CD4-positive, alpha-beta memory T cell (primary cell): ENCODE measurements at regions of chr2 and their contacts with region 1.

Region 1: DNA sequence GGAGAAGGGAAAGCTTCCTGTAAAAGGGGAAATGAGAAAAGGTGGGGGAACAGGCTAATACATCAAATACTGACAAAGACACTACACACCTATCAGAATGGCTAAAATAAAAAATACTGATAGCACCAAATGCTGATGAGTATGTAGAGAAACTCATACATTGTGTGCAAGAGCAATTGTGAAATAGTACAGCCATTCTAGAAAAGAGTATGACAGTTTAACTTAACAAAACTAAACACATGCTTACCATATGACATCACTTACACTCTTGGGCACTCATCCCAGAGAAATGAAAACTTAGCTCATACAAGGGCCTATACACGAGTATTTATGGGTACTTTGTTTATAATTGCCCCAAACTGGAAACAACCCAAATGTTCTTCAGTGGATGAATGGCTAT is 53.4 kb downstream of the ZNF638 start:
- DNase-seq: no peak
- H3K4me3 ChIP-seq: no peak overlapping the region
- H3K4me3 Mint-ChIP-seq: no peak overlapping the region
- H3K27ac ChIP-seq: no peak overlapping the region
- H3K27ac Mint-ChIP-seq: no peak overlapping the region
- H3K4me1 ChIP-seq: no peaks in the 10 kb centered on the region
- H3K4me1 Mint-ChIP-seq: peaks cover 0 to 10% (median 0%) of the 10 kb centered on the region in 4 donors
- H3K27me3 ChIP-seq: no peaks in the 10 kb centered on the region
- H3K27me3 Mint-ChIP-seq: no peaks in the 10 kb centered on the region

Region 2: DNA sequence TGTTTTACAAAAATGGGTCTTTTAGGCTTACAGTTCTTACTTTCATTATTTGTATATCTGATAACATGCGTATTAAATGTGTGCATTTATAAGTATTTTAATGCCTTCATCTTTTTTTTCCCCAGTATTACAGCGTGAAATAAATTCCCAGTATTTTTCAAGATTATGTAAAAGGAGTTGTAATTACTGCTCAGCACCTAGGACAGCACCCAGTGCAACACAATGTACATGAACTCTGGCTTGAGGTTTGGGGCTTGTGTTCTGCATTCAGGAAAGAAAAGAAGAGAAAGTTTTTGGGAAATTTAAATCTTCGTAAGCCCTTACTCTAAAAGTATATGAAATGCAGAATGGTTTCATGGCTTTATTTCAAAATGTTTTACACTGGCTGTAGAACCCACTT is 36.7 kb before region 1 on chr2:
- CTCF ChIA-PET with region 1: no interaction called
- POLR2A ChIA-PET with region 1: no interaction called
- intact Hi-C with region 1: loop called (anchors 5 kb)
- DNase-seq: peak in 1 of 5 donors; percentile 11
- H3K4me3 ChIP-seq: no peak overlapping the region
- H3K4me3 Mint-ChIP-seq: no peak overlapping the region
- H3K27ac ChIP-seq: no peak overlapping the region
- H3K27ac Mint-ChIP-seq: no peak overlapping the region
- H3K4me1 ChIP-seq: peaks cover 36% of the 10 kb centered on the region
- H3K4me1 Mint-ChIP-seq: peaks cover 46 to 84% (median 68%) of the 10 kb centered on the region in 4 donors
- H3K27me3 ChIP-seq: no peaks in the 10 kb centered on the region
- H3K27me3 Mint-ChIP-seq: no peaks in the 10 kb centered on the region

Region 3: GRCh38 chr2:71395471-71395870 is 10.5 kb after region 1 on chr2:
- CTCF ChIA-PET with region 1: no interaction called
- POLR2A ChIA-PET with region 1: no interaction called
- intact Hi-C with region 1: no loop called
- DNase-seq: no peak
- H3K4me3 ChIP-seq: no peak overlapping the region
- H3K4me3 Mint-ChIP-seq: no peak overlapping the region
- H3K27ac ChIP-seq: no peak overlapping the region
- H3K27ac Mint-ChIP-seq: no peak overlapping the region
- H3K4me1 ChIP-seq: no peaks in the 10 kb centered on the region
- H3K4me1 Mint-ChIP-seq: peaks cover 0 to 5% (median 0%) of the 10 kb centered on the region in 4 donors
- H3K27me3 ChIP-seq: no peaks in the 10 kb centered on the region
- H3K27me3 Mint-ChIP-seq: no peaks in the 10 kb centered on the region

Region 4: GRCh38 chr2:71524476-71524875 is 139.5 kb after region 1 on chr2:
- CTCF ChIA-PET with region 1: no interaction called
- POLR2A ChIA-PET with region 1: no interaction called
- intact Hi-C with region 1: no loop called
- DNase-seq: no peak
- H3K4me3 ChIP-seq: no peak overlapping the region
- H3K4me3 Mint-ChIP-seq: no peak overlapping the region
- H3K27ac ChIP-seq: no peak overlapping the region
- H3K27ac Mint-ChIP-seq: no peak overlapping the region
- H3K4me1 ChIP-seq: no peaks in the 10 kb centered on the region
- H3K4me1 Mint-ChIP-seq: no peaks in the 10 kb centered on the region
- H3K27me3 ChIP-seq: peaks cover 4% of the 10 kb centered on the region
- H3K27me3 Mint-ChIP-seq: peaks cover 25 to 43% of the 10 kb centered on the region in 2 donors